CD4-positive, alpha-beta T cell (primary cell): ENCODE measurements at regions of chr1 and their contacts with region 1.

Region 1: GRCh38 chr1:100895540-100896483 is at the start of gene SLC30A7:
- DNase-seq: peak; percentile 91 to 98 (median 97)
- ATAC-seq: peak; percentile 71
- H3K4me3 ChIP-seq: peak within 1 kb of the TSS; percentile 93
- H3K4me3 Mint-ChIP-seq: peak within 1 kb of the TSS; percentile 98
- H3K27ac ChIP-seq: peak within 1 kb of the TSS; percentile 98 to 100
- H3K27ac Mint-ChIP-seq: peak within 1 kb of the TSS; percentile 99
- H3K4me1 ChIP-seq: peaks cover 10% of the 10 kb centered on the region
- H3K4me1 Mint-ChIP-seq: peaks cover 69% of the 10 kb centered on the region
- H3K27me3 ChIP-seq: no peaks in the 10 kb centered on the region
- H3K27me3 Mint-ChIP-seq: no peaks in the 10 kb centered on the region
- CTCF ChIP-seq: no peak
- total RNA-seq, gene SLC30A7: 21.6 to 21.7 TPM

Region 2: GRCh38 chr1:100265931-100266740 is 629.7 kb before region 1 on chr1 and contains the start of gene RTCA:
- CTCF ChIA-PET with region 1: no interaction called
- POLR2A ChIA-PET with region 1: interaction called, 5 read pairs
- intact Hi-C with region 1: loop called in 1 of 2 experiments (anchors 5 kb)
- DNase-seq: peak; percentile 88 to 98 (median 94)
- ATAC-seq: peak; percentile 95
- H3K4me3 ChIP-seq: peak within 1 kb of the TSS; percentile 96
- H3K4me3 Mint-ChIP-seq: peak within 1 kb of the TSS; percentile 99
- H3K27ac ChIP-seq: peak within 1 kb of the TSS; percentile 62 to 67
- H3K27ac Mint-ChIP-seq: peak within 1 kb of the TSS; percentile 93
- H3K4me1 ChIP-seq: peaks cover 41% of the 10 kb centered on the region
- H3K4me1 Mint-ChIP-seq: peaks cover 60% of the 10 kb centered on the region
- H3K27me3 ChIP-seq: no peaks in the 10 kb centered on the region
- H3K27me3 Mint-ChIP-seq: no peaks in the 10 kb centered on the region
- CTCF ChIP-seq: no peak
- total RNA-seq, gene RTCA: 62.1 to 67.1 TPM

Region 3: DNA sequence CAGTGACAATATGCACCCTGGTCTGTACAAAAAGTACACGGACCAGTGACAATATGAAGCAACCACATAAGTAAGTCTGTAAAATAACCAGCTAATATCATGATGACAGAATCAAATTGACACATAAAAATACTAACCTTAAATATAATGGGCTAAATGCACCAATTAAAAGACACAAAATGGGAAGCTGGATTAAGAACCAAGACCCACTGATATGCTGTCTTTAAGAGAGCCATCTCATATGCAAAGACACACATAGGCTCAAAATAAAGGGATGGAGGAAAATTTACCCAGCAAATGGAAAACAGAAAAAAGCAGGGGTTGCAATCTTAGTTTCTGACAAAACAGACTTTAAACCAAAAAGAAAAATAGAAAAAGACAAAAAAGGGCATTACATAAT is 246.7 kb before region 1 on chr1:
- CTCF ChIA-PET with region 1: no interaction called
- POLR2A ChIA-PET with region 1: no interaction called
- intact Hi-C with region 1: no loop called
- DNase-seq: no peak
- ATAC-seq: no peak
- H3K4me3 ChIP-seq: no peak overlapping the region
- H3K4me3 Mint-ChIP-seq: no peak overlapping the region
- H3K27ac ChIP-seq: no peak overlapping the region
- H3K27ac Mint-ChIP-seq: no peak overlapping the region
- H3K4me1 ChIP-seq: no peaks in the 10 kb centered on the region
- H3K4me1 Mint-ChIP-seq: no peaks in the 10 kb centered on the region
- H3K27me3 ChIP-seq: peaks cover 4 to 17% of the 10 kb centered on the region in 2 experiments
- H3K27me3 Mint-ChIP-seq: peaks cover 11% of the 10 kb centered on the region
- CTCF ChIP-seq: no peak

Region 4: GRCh38 chr1:100912019-100912418 is 16.2 kb after region 1 on chr1:
- CTCF ChIA-PET with region 1: interaction called, 4 read pairs
- POLR2A ChIA-PET with region 1: interaction called, 15 read pairs
- intact Hi-C with region 1: loop called in 1 of 2 experiments (anchors 2 kb)
- DNase-seq: no peak
- ATAC-seq: no peak
- H3K4me3 ChIP-seq: no peak overlapping the region
- H3K4me3 Mint-ChIP-seq: no peak overlapping the region
- H3K27ac ChIP-seq: no peak overlapping the region
- H3K27ac Mint-ChIP-seq: peak overlapping the region; percentile 50
- H3K4me1 ChIP-seq: no peaks in the 10 kb centered on the region
- H3K4me1 Mint-ChIP-seq: peaks cover 38% of the 10 kb centered on the region
- H3K27me3 ChIP-seq: no peaks in the 10 kb centered on the region
- H3K27me3 Mint-ChIP-seq: no peaks in the 10 kb centered on the region
- CTCF ChIP-seq: no peak

Region 5: DNA sequence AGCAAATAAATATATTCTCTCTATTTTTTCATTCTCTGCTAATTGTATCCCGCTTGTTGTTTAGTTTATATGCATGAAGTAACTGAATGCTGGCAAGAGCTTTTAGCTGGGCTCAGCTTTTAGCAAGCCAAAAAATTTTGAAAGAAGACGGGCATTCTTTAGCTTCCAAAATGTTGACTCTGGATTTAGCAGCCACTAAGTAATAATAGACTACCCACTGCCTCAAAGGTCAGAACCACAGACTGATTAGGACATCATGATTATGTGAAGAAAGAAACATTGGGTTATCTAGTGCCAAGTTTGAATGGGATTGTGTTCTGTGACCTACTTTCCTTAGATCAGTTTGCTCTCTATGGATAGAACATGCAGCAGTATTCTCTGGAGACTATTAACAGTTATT is 210.1 kb after region 1 on chr1:
- CTCF ChIA-PET with region 1: no interaction called
- POLR2A ChIA-PET with region 1: no interaction called
- intact Hi-C with region 1: no loop called
- DNase-seq: no peak
- ATAC-seq: no peak
- H3K4me3 ChIP-seq: no peak overlapping the region
- H3K4me3 Mint-ChIP-seq: no peak overlapping the region
- H3K27ac ChIP-seq: no peak overlapping the region
- H3K27ac Mint-ChIP-seq: no peak overlapping the region
- H3K4me1 ChIP-seq: peaks cover 16% of the 10 kb centered on the region
- H3K4me1 Mint-ChIP-seq: peaks cover 42% of the 10 kb centered on the region
- H3K27me3 ChIP-seq: no peaks in the 10 kb centered on the region
- H3K27me3 Mint-ChIP-seq: no peaks in the 10 kb centered on the region
- CTCF ChIP-seq: no peak

Region 6: DNA sequence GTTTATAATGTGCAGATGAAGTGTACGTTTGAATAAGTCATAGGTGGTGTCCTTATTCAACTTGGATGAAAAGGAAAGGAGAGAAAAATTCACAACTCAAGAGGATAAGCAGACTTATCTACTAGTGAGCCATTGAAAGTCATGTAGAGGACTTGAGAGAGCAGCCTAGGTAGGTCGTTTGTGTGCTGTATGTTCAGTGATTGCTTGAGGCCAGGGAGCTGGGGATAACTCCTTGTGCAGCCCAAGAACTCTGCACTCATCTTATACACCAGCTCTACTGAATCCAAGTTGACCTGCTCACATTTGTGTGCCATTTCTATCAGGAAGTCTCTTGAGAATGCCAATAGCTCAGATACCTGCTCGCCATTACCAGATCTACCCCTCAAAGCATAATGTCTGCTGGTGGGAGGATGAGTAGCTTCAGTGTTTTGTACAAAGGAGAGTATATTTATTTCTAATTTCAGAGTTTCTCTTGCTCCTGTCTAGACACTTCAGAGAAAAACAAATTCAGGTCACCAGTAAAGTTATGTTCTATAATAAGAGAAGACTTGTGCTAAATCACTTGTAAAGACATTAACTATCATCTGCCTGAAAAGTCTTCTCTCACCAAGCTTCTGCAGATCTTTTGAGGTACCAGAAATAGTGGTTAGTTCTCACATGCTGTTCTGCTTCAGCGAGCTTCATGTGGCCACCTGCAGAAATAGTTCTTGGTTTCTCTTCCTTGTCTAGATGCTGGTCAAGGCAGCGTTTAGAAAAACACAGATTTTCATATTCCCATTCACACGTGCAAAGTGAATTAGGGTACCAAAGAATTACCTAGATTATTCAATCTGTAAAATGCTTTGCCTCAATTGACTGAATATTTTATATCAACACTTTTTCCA is 351.8 kb after region 1 on chr1:
- CTCF ChIA-PET with region 1: no interaction called
- POLR2A ChIA-PET with region 1: interaction called, 14 read pairs
- intact Hi-C with region 1: no loop called
- DNase-seq: no peak
- ATAC-seq: no peak
- H3K4me3 ChIP-seq: no peak overlapping the region
- H3K4me3 Mint-ChIP-seq: peak overlapping the region; percentile 8
- H3K27ac ChIP-seq: no peak overlapping the region
- H3K27ac Mint-ChIP-seq: peak overlapping the region; percentile 40
- H3K4me1 ChIP-seq: peaks cover 44% of the 10 kb centered on the region
- H3K4me1 Mint-ChIP-seq: peaks cover 79% of the 10 kb centered on the region
- H3K27me3 ChIP-seq: no peaks in the 10 kb centered on the region
- H3K27me3 Mint-ChIP-seq: no peaks in the 10 kb centered on the region
- CTCF ChIP-seq: no peak

Region 7: DNA sequence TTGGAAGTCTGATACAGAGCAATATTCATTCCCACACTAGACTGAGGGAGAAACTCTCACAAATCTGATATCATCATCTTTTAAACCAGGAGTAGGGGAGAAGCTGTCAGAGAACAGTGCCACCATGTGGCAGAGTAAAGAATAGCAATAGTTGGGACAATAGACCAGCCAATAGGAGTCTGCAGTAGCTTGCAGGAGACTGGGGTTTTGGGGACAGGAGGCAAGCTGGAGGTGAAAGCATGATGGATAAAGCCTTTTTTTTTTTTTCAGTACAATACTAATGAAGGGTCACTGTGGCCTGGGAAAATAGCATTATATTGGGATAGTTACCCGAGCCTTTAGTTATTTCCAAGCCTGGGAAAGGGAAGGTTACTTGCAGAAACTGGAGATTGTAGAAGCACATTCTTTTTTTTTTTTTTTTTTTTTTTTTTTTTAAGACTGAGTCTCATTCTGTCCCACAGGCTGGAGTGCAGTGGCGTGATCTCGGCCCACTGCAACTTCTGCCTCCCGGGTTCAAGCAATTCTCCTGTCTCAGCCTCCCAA is 461.7 kb after region 1 on chr1:
- CTCF ChIA-PET with region 1: interaction called, 5 read pairs
- POLR2A ChIA-PET with region 1: interaction called, 3 read pairs
- intact Hi-C with region 1: loop called (anchors 5 kb)
- DNase-seq: peak; percentile 43 to 92 (median 60)
- ATAC-seq: peak; percentile 100
- H3K4me3 ChIP-seq: no peak overlapping the region
- H3K4me3 Mint-ChIP-seq: no peak overlapping the region
- H3K27ac ChIP-seq: no peak overlapping the region
- H3K27ac Mint-ChIP-seq: peak overlapping the region; percentile 5
- H3K4me1 ChIP-seq: peaks cover 7% of the 10 kb centered on the region
- H3K4me1 Mint-ChIP-seq: peaks cover 9% of the 10 kb centered on the region
- H3K27me3 ChIP-seq: no peaks in the 10 kb centered on the region
- H3K27me3 Mint-ChIP-seq: no peaks in the 10 kb centered on the region
- CTCF ChIP-seq: peak; percentile 84